Heart left ventricle (tissue), 16 donors: ENCODE measurements at regions of chr1 and their contacts with region 1.

Region 1: DNA sequence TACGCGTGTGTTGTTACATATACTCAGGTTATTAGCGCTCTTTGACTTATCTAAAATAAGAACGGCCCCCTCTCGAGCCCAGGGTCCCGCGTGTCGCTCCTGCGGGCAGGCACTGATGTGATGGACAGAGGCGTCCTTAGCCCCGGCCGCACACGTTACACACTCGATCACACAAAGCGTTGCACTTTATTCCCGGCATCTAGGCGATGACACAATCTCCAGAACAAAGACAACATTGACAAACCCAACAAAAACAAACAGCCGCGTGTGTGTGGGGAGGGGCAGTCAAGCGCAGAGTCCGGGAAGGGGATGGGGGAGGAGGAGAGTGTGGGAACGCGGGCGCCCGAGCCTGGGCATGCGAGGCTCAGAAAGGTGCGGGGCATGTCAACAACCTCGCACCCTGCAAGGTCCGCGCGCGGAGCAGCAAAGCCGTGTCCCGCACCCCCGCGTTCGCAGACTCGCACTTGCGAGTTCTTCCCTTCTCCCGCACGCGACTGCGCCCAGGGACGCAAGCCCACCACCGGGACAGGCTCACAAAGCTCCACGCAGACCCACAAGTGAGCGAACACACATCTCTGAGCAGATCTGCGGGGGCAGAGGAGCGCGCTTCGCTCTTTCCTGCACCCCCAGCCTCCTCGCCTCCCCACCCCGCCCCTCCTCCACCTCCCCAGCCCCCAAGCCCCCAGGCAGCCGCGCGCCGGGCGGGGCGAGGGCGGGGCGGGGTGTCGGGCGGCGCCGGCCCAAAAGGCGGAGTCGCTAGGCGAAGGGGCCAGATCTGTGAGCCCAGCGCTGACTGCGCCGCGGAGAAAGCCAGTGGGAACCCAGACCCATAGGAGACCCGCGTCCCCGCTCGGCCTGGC is at the start of gene EFNA1:
- DNase-seq: peak; percentile 74 to 88 (median 81)
- ATAC-seq: peak; percentile 39 to 76 (median 66)
- H3K4me3 ChIP-seq: peak within 1 kb of the TSS; percentile 68 to 95 (median 82)
- H3K27ac ChIP-seq: peak within 1 kb of the TSS; percentile 87 to 100 (median 96)
- H3K4me1 ChIP-seq: peaks cover 7 to 70% (median 42%) of the 10 kb centered on the region in 12 donors
- H3K27me3 ChIP-seq: peaks cover 0 to 35% (median 0%) of the 10 kb centered on the region in 9 donors
- CTCF ChIP-seq: no peak
- POLR2A ChIP-seq: peak in 1 of 2 donors; percentile 97
- total RNA-seq, gene EFNA1: 22.8 to 51.8 (median 37.2) TPM

Region 2: DNA sequence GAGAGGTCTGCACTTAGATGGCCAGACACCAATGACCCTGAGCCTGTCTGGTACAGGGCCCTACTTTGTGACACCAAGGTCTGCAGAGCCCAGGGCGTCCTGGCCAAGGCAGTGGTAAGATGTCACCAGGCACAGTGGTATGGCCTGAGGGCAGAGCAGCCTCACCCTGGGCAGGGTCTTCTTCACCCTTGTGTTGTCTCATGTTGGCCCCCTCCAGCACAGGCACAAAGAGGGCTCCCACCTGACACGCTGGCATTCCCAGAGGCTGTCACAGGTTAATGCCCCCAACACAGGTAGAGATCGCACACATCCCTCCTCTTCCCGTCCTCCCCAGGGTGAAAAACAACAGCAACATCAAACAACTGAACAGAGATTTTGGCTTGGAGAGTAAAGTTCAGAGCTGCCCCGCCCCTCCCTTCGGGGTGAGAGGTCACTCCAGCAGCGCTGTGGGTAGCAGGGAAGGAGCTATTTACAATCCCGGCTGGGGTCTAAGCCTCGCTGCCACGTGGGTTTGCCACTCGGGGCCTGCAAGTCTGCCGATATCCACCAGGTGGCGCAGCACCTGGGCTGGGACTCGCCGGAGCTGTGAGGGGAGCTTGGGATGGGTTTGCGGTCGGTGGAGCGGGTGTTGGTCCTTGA is 36.1 kb before region 1 on chr1:
- intact Hi-C with region 1: loop called (anchors 2 to 5 kb)
- DNase-seq: peak; percentile 73 to 91 (median 80)
- ATAC-seq: peak in 3 of 4 donors; percentile 53 to 70 (median 65)
- H3K4me3 ChIP-seq: no peak overlapping the region
- H3K27ac ChIP-seq: no peak overlapping the region
- H3K4me1 ChIP-seq: peaks cover 7 to 34% (median 17%) of the 10 kb centered on the region in 12 donors
- H3K27me3 ChIP-seq: peaks cover 0 to 5% (median 0%) of the 10 kb centered on the region in 9 donors
- CTCF ChIP-seq: peak; percentile 95 to 99 (median 98)
- POLR2A ChIP-seq: no peak

Region 3: DNA sequence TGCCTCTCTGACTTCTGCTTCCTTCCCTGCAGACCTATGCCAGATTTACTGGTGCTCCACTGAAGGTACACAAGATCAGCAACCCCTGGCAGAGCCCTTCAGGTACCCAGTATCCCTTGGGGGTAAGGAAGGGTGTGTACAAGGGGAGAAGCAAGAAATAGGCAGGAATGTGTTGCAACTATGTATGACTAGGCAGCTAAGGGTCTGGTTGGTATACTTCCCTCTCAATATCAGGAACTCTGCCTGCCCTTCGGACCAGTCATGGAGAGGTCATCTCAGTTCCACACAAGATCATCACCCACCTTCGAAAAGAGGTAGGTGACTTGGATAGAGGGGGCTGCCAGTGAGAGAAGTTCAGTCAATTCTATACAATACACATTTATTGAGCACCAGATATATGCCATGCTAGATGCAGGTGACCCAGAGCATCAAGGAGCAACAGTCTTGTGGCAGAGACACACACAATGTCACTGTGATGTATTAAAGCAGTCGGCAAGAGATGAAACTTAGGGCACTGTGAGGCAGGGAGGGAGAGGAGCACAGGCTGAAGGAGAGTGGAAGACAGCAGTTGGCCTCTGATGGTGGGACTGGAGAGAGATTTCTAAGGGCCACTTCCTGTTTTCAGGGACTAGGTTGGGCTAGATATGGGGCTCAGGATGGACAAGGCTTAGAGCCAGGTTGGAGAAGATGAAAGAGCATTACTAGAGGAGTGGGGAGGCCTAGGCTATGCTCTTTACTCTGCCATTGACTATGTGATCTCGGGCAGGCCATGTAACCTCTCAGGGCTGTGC is 83.2 kb after region 1 on chr1:
- intact Hi-C with region 1: no loop called
- DNase-seq: peak in 1 of 5 donors; percentile 4
- ATAC-seq: no peak
- H3K4me3 ChIP-seq: peak overlapping the region in 1 of 12 donors; percentile 78
- H3K27ac ChIP-seq: peak overlapping the region in 4 of 12 donors; percentile 43 to 100 (median 88)
- H3K4me1 ChIP-seq: peaks cover 0 to 47% (median 27%) of the 10 kb centered on the region in 12 donors
- H3K27me3 ChIP-seq: no peaks in the 10 kb centered on the region
- CTCF ChIP-seq: no peak
- POLR2A ChIP-seq: no peak

Region 4: DNA sequence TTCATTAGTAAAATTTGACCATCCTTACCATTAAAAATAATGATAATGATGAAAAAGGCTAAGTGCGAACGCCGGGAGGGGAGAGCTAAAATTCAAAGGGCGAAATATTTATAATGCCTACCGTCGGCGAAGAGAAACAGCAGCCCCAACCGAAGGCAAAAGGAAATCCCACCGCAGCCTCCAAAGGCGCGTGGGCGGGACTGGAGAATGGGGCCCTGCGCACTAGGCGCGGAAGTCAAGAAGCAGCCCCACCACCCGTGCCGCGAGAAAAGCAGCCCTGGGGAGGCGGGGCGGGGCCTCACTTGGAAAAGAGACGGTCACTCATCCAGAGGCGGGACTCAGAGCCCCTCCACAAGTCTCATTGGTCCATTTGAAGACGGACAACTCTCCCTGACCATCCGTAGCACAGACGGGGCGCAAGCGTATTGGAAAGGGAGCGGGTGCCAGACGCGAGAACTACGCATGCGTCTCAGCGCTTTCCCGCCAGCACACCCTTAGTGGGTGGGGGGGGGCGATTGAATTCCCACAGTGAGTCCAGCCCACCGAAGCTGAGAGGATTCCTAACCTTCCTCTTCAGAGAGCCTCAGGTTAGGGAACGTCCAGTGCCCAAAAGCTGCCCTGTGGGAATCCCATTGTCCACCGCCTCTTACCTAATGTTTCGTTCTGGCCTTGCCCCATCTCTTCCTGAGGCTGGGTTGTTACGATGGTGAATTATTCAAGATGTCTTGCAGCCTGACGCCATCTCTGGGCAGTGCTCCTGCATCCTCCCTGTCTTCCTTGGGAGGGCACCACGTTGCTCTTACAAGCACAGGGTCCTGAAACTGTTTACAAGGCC is 100.1 kb after region 1 on chr1:
- intact Hi-C with region 1: no loop called
- DNase-seq: peak; percentile 98 to 99 (median 99)
- ATAC-seq: peak; percentile 99
- H3K4me3 ChIP-seq: peak overlapping the region; percentile 22 to 77 (median 62)
- H3K27ac ChIP-seq: peak overlapping the region; percentile 42 to 96 (median 88)
- H3K4me1 ChIP-seq: peaks cover 0 to 54% (median 17%) of the 10 kb centered on the region in 12 donors
- H3K27me3 ChIP-seq: no peaks in the 10 kb centered on the region
- CTCF ChIP-seq: no peak
- POLR2A ChIP-seq: peak in 1 of 2 donors; percentile 81